A673 (cell line): ENCODE measurements at regions of chrX and their contacts with region 1.

Region 1: GRCh38 chrX:39513836-39514235 is 583.9 kb downstream of the BCOR start:
- DNase-seq: no peak
- H3K4me3 ChIP-seq: no peak overlapping the region
- H3K27ac ChIP-seq: no peak overlapping the region
- H3K4me1 ChIP-seq: no peaks in the 10 kb centered on the region
- H3K27me3 ChIP-seq: no peaks in the 10 kb centered on the region
- CTCF ChIP-seq: no peak

Region 2: DNA sequence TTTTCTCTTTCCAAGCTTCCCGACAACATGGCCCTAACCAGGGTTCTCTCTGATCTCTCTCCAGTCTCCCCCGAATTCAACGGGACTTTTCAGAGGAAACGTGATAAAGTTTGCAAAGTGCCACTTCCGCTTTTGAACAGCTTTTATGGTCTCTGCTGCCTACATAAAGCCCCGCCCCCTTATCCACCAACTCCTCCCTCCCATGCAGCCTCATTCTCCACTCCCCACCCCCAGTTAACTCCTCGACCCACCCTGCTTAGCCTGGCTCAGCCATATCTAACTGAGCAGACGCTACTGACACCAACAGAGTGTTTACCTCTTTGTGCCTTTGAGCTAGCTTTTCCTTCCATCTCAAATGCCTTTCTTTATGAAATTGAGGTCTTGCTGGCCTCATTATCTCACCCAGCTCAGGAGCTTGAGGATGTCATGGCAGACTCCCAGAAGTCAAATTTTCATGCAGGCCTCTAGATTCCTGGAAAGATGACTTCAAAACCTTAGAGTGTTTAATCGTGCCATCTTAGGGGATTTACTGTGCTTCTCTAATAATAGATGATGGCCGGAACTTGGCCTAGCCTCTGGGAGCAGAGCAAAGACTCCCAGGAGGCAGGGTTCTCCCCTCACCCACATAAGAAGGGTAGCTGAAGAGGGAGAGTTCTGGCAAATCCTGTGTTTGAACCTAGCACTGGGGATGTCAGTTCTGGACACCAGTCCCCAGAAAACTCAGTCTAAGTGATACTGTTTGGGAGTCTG is 22.1 kb before region 1 on chrX:
- CTCF ChIA-PET with region 1: no interaction called
- POLR2A ChIA-PET with region 1: no interaction called
- intact Hi-C with region 1: loop called (anchors 2 kb)
- DNase-seq: no peak
- H3K4me3 ChIP-seq: no peak overlapping the region
- H3K27ac ChIP-seq: no peak overlapping the region
- H3K4me1 ChIP-seq: peaks cover under 1% of the 10 kb centered on the region
- H3K27me3 ChIP-seq: no peaks in the 10 kb centered on the region
- CTCF ChIP-seq: no peak